ENCODE measurements at regions of chr15 and their contacts with region 1.

Region 1: GRCh38 chr15:67422296-67422695 is 98.6 kb upstream of the C15orf61 start:
- DNase-seq: no peak
- H3K4me3 ChIP-seq: no peak overlapping the region
- H3K27ac ChIP-seq: no peak overlapping the region
- H3K4me1 ChIP-seq: no peaks in the 10 kb centered on the region
- H3K27me3 ChIP-seq: no peaks in the 10 kb centered on the region
- CTCF ChIP-seq: no peak
- POLR2A ChIP-seq: no peak

Region 2: GRCh38 chr15:66827039-66827697 is 595.1 kb before region 1 on chr15:
- CTCF ChIA-PET with region 1: no interaction called
- POLR2A ChIA-PET with region 1: no interaction called
- dilution Hi-C with region 1: no loop called
- intact Hi-C with region 1: loop called (anchors 5 kb)
- DNase-seq: no peak
- H3K4me3 ChIP-seq: no peak overlapping the region
- H3K27ac ChIP-seq: no peak overlapping the region
- H3K4me1 ChIP-seq: peaks cover 8% of the 10 kb centered on the region
- H3K27me3 ChIP-seq: no peaks in the 10 kb centered on the region
- CTCF ChIP-seq: no peak
- POLR2A ChIP-seq: no peak

Region 3: GRCh38 chr15:67358812-67359211 is 63.5 kb before region 1 on chr15:
- CTCF ChIA-PET with region 1: no interaction called
- POLR2A ChIA-PET with region 1: no interaction called
- dilution Hi-C with region 1: no loop called
- intact Hi-C with region 1: no loop called
- DNase-seq: no peak
- H3K4me3 ChIP-seq: no peak overlapping the region
- H3K27ac ChIP-seq: no peak overlapping the region
- H3K4me1 ChIP-seq: no peaks in the 10 kb centered on the region
- H3K27me3 ChIP-seq: no peaks in the 10 kb centered on the region
- CTCF ChIP-seq: no peak
- POLR2A ChIP-seq: no peak